HEK293 (cell line): ENCODE measurements at regions of chr6 and their contacts with region 1.

Region 1: GRCh38 chr6:116648156-116648555 is 20.4 kb downstream of the ZUP1 start:
- H3K4me3 ChIP-seq: no peak overlapping the region
- H3K27ac ChIP-seq: no peak overlapping the region
- H3K4me1 ChIP-seq: peaks cover 11% of the 10 kb centered on the region
- CTCF ChIP-seq: no peak

Region 2: DNA sequence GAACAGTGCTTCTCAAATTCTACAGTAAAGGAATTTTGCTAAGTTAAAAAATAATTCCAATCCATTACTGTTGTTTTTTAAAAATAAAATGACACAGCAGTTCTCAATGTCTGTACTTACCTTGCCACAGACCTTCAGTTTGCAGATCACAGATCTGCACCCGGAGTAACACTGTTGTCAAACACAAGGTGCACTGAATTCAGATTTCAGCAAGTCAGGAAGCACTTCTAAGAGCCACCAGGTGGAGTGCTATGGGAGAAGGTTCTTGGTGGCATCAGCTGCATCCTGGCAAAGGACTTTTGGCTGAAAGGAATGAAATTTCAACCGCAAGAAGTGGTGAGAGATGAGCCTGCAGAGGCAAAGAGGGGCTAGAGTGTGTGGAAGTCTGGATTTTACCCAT is 14.5 kb before region 1 on chr6:
- CTCF ChIA-PET with region 1: interaction called, 13 read pairs
- POLR2A ChIA-PET with region 1: no interaction called
- H3K4me3 ChIP-seq: no peak overlapping the region
- H3K27ac ChIP-seq: no peak overlapping the region
- H3K4me1 ChIP-seq: no peaks in the 10 kb centered on the region
- CTCF ChIP-seq: peak; percentile 19; the same call in 1 of the 2 replicates